Psoas muscle (tissue), 8 donors: ENCODE measurements at regions of chr17 and their contacts with region 1.

Region 1: GRCh38 chr17:7583253-7584109 is at the start of gene MPDU1:
- DNase-seq: peak; percentile 98 to 99
- ATAC-seq: peak; percentile 81 to 87 (median 82)
- H3K4me3 ChIP-seq: peak within 1 kb of the TSS; percentile 78
- H3K27ac ChIP-seq: peak within 1 kb of the TSS; percentile 89
- H3K4me1 ChIP-seq: peaks cover 42% of the 10 kb centered on the region
- H3K27me3 ChIP-seq: no peaks in the 10 kb centered on the region
- CTCF ChIP-seq: no peak
- total RNA-seq, gene MPDU1: 19.3 to 40.6 (median 34.1) TPM

Region 2: GRCh38 chr17:7444682-7445618 is 138.5 kb before region 1 on chr17 and contains the start of gene CHRNB1:
- intact Hi-C with region 1: no loop called
- DNase-seq: peak; percentile 93 to 95
- ATAC-seq: peak; percentile 85 to 89 (median 87)
- H3K4me3 ChIP-seq: peak within 1 kb of the TSS; percentile 92
- H3K27ac ChIP-seq: peak within 1 kb of the TSS; percentile 100
- H3K4me1 ChIP-seq: peaks cover 34% of the 10 kb centered on the region
- H3K27me3 ChIP-seq: peaks cover 0 to 7% (median 0%) of the 10 kb centered on the region in 3 donors
- CTCF ChIP-seq: peak; percentile 10
- total RNA-seq, gene CHRNB1: 107 to 190 (median 147) TPM

Region 3: GRCh38 chr17:7614422-7615264 is 31.2 kb after region 1 on chr17 and contains the start of gene FXR2:
- intact Hi-C with region 1: loop called in 1 of 2 experiments (anchors 1 kb)
- DNase-seq: peak; percentile 100
- ATAC-seq: peak; percentile 94 to 97 (median 96)
- H3K4me3 ChIP-seq: peak within 1 kb of the TSS; percentile 94
- H3K27ac ChIP-seq: peak within 1 kb of the TSS; percentile 95
- H3K4me1 ChIP-seq: peaks cover 33% of the 10 kb centered on the region
- H3K27me3 ChIP-seq: no peaks in the 10 kb centered on the region
- CTCF ChIP-seq: peak; percentile 45
- total RNA-seq, gene FXR2: 105 to 120 (median 114) TPM

Region 4: DNA sequence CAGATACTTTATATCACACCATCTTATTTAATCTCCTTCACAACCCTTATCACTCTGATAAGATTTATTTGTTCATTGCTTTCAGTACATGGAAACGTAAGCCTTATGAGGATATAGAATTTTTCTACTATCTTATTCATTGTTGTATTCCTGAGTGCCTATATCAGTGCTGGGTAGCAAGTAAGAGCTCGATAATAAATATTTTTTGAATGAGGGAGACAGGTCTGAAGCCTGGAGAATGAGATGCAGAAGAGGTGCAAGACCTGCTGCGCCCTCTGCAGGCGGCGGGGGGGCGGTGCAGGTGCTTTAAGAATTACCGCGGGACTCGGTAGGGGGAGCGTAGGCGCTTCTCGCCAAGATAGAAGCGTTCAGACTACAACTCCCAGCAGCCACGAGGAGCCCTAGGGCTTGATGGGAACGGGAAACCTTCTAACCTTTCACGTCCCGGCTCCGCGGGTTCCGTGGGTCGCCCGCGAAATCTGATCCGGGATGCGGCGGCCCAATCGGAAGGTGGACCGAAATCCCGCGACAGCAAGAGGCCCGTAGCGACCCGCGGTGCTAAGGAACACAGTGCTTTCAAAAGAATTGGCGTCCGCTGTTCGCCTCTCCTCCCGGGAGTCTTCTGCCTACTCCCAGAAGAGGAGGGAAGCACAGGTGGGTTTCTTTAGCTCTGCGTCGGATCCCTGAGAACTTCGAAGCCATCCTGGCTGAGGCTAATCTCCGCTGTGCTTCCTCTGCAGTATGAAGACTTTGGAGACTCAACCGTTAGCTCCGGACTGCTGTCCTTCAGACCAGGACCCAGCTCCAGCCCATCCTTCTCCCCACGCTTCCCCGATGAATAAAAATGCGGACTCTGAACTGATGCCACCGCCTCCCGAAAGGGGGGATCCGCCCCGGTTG is 104.7 kb after region 1 on chr17 and contains the start of gene WRAP53:
- intact Hi-C with region 1: loop called in 1 of 2 experiments (anchors 5 kb)
- DNase-seq: peak; percentile 97 to 98
- ATAC-seq: peak; percentile 84 to 91 (median 89)
- H3K4me3 ChIP-seq: peak within 1 kb of the TSS; percentile 88
- H3K27ac ChIP-seq: peak within 1 kb of the TSS; percentile 98
- H3K4me1 ChIP-seq: peaks cover 29% of the 10 kb centered on the region
- H3K27me3 ChIP-seq: no peaks in the 10 kb centered on the region
- CTCF ChIP-seq: peak; percentile 99
- total RNA-seq, gene WRAP53: 4.5 to 6.6 (median 5.0) TPM